Heart right ventricle (tissue), 16 donors: ENCODE measurements at regions of chr16 and their contacts with region 1.

Region 1: DNA sequence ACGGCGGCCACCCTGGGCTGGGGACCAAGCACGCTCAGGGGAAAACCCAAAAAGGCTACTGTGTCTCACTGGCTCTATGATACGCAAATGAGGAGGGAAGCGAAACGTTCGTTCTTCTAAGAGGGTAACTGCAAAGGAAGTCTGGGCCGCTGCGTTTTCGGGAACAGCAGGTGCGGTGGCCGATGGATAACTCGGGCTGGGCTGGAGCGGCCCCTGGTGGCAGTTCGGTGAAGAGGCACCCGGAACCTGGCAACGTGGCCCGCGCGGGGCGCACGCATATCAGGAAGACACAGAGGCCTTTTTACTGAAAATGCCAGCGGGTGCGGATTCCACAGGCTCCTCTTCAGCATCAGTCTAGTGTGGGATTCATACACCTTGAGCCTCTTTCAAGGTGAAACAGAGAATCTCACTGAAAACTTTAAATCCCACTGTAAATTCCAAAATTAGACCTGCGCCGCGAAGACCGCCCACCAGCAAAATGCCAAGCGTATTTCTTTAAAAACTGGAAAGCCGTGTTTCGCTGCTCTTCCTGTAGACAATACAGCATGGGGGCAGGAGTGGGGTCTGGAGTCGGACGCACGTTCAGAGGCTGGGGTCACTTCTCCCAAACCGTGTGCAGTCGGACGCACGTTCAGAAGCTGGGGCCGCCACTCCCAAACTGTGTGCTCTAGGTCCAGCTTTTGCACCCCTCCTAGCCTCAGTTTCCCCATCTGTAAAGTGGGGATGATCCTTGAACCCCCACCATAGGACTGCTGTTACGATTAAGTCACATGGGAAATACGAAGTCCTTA is 44.4 kb upstream of the METTL9 start:
- DNase-seq: peak; percentile 87 to 91
- ATAC-seq: peak; percentile 49 to 82 (median 71)
- H3K4me3 ChIP-seq: peak overlapping the region in 4 of 10 donors; percentile 2 to 34 (median 13)
- H3K27ac ChIP-seq: peak overlapping the region in 1 of 10 donors; percentile 48
- H3K4me1 ChIP-seq: peaks cover 4 to 31% (median 16%) of the 10 kb centered on the region in 9 donors
- H3K27me3 ChIP-seq: peaks cover 0 to 17% (median 9%) of the 10 kb centered on the region in 7 donors
- CTCF ChIP-seq: peak in 8 of 9 donors; percentile 98 to 100 (median 100)

Region 2: DNA sequence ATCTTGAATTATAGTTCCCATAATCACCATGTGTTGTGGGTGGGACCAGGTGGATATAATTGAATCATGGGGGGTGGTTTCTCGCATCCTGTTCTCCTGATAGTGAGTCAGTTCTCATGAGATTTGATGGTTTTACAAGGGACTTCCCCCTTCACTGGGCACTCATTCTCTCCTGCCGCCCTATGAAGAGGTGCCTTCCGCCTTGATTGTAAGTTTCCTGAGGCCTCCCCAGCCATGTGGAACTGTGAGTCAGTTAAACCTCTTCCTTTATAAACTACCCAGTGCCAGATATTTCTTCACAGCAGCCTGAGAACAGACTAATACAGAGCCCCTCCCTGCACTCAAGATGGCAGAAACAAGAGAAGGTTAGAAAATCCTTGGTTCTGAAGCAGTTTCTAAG is 370.2 kb before region 1 on chr16:
- intact Hi-C with region 1: loop called in 2 of 10 experiments (anchors 10 kb)
- DNase-seq: no peak
- ATAC-seq: no peak
- H3K4me3 ChIP-seq: no peak overlapping the region
- H3K27ac ChIP-seq: no peak overlapping the region
- H3K4me1 ChIP-seq: peaks cover 0 to 8% (median 0%) of the 10 kb centered on the region in 9 donors
- H3K27me3 ChIP-seq: no peaks in the 10 kb centered on the region
- CTCF ChIP-seq: no peak

Region 3: GRCh38 chr16:21501909-21502667 is 52.9 kb before region 1 on chr16:
- intact Hi-C with region 1: loop called in 3 of 10 experiments (anchors 10 kb)
- DNase-seq: peak; percentile 92 to 97
- ATAC-seq: peak; percentile 97 to 98 (median 98)
- H3K4me3 ChIP-seq: peak overlapping the region; percentile 68 to 100 (median 90)
- H3K27ac ChIP-seq: peak overlapping the region; percentile 78 to 99 (median 96)
- H3K4me1 ChIP-seq: peaks cover 4 to 36% (median 19%) of the 10 kb centered on the region in 9 donors
- H3K27me3 ChIP-seq: no peaks in the 10 kb centered on the region
- CTCF ChIP-seq: peak in 3 of 9 donors; percentile 24 to 28 (median 25)

Region 4: DNA sequence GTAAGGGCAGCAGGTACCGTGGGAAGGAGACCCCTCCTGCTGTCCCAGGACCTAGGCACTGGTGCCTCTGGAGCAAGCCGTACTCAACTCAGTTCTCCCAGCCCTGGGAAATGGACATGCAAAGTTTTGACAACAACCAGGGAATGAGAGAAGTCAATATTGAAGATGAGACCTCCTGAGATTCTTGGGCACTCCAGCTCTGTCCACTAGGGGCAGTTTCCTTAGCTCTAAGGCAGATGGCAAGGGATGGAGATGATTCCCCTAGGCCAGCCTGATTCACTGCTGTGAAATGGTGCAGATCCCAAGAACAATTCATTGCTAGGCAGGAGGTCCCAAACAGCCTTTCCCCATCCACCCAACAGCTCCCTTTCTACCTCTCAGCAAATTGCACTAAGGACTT is 586.8 kb after region 1 on chr16:
- intact Hi-C with region 1: no loop called
- DNase-seq: no peak
- ATAC-seq: no peak
- H3K4me3 ChIP-seq: no peak overlapping the region
- H3K27ac ChIP-seq: no peak overlapping the region
- H3K4me1 ChIP-seq: no peaks in the 10 kb centered on the region
- H3K27me3 ChIP-seq: no peaks in the 10 kb centered on the region
- CTCF ChIP-seq: peak in 1 of 9 donors; percentile 35

Region 5: DNA sequence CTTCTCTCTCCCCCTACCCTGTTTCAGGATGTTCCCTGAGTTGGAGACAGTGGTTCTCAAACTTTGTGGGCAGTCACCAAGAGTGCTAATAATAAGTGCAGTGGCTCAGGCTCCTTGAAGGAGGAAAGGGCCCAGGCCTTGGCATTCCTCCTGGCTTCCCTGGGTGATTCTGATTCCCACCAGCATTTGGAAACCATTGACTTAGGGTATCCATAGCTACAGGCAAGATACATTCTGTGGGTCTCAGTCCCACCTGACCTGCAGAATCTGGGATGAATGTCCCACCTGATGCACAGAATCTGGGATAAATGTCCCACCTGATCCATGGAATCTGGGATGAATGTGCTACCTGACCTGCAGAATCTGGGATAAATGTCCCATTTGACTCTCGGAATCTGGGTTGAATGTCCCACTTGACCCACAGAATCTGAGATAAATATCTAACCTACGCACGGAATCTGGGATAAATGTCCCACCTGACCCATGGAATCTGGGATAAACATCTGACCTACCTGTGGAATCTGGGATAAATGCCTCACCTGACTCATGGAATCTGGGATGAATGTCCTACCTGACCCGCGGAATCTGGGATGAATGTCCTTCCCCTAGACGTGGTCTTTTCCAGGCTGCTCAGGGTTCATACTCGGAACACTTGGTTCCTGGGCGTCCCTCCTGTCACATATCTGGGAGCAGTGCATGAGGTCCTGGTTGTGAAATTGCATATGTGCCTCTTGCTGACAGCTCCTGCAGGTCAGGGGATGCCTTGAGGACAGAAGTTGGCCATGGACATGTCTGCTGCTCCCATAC is 1122.2 kb after region 1 on chr16:
- intact Hi-C with region 1: loop called in 1 of 10 experiments (anchors 2 kb)
- DNase-seq: no peak
- ATAC-seq: peak in 1 of 8 donors; percentile 51
- H3K4me3 ChIP-seq: no peak overlapping the region
- H3K27ac ChIP-seq: no peak overlapping the region
- H3K4me1 ChIP-seq: peaks cover 0 to 23% (median 6%) of the 10 kb centered on the region in 9 donors
- H3K27me3 ChIP-seq: peaks cover 0 to 28% (median 16%) of the 10 kb centered on the region in 7 donors
- CTCF ChIP-seq: no peak

Region 6: DNA sequence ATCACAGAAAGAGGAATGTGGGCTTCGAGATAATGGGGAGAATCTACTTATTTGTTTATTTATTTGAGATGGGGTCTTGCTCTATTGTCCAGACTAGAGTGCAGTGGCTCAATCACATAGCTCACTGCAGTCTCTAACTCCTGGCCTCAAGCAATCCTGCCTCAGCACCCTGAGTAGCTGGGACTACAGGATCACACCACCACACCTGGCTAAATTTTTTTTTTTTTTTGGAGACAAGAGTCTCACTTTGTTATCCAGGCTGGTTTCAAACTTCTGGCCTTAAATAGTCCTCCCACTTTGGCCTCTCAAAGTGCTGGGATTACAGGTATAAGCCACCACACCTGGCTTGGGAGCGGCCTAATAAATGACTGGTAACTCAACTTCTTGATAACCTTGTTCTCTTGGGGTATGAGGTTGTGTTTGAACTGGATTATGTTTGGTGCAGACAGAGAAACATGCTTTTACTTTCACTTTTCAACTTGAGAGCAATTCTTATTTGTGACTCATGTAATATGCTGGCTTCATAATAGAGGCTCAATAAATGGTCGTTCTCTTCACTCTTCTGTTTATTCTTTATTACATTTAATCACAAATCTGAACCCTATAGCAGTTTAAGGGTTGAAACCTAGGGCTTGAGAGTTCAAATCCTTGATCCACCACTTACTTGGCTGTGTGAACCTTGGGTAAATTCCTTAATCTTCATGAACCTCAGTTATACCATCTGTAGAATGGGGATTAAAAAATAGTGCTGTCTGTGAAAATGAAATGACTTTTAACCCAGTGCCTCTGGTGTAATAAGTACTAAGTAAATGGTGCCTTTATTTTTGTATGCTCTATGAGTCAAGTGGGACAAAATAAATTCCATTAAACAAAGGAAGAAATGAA is 1129.8 kb after region 1 on chr16:
- intact Hi-C with region 1: loop called in 1 of 10 experiments (anchors 2 kb)
- DNase-seq: no peak
- ATAC-seq: no peak
- H3K4me3 ChIP-seq: no peak overlapping the region
- H3K27ac ChIP-seq: peak overlapping the region; percentile 0 to 56 (median 26)
- H3K4me1 ChIP-seq: peaks cover 0 to 19% (median 11%) of the 10 kb centered on the region in 9 donors
- H3K27me3 ChIP-seq: peaks cover 0 to 10% (median 3%) of the 10 kb centered on the region in 7 donors
- CTCF ChIP-seq: no peak

Region 7: GRCh38 chr16:22948603-22949368 is 1393.8 kb after region 1 on chr16:
- intact Hi-C with region 1: loop called in 1 of 10 experiments (anchors 10 kb)
- DNase-seq: peak; percentile 45 to 68
- ATAC-seq: peak; percentile 69 to 92 (median 84)
- H3K4me3 ChIP-seq: peak overlapping the region in 7 of 10 donors; percentile 1 to 39 (median 29)
- H3K27ac ChIP-seq: no peak overlapping the region
- H3K4me1 ChIP-seq: peaks cover 0 to 16% (median 9%) of the 10 kb centered on the region in 9 donors
- H3K27me3 ChIP-seq: peaks cover 0 to 49% (median 31%) of the 10 kb centered on the region in 7 donors
- CTCF ChIP-seq: peak; percentile 65 to 85 (median 72)